H1 (cell line): ENCODE measurements at regions of chr3 and their contacts with region 1.

Region 1: GRCh38 chr3:186965141-186965879 is 35.0 kb downstream of the ST6GAL1 start:
- DNase-seq: no peak
- H3K4me3 ChIP-seq: peak overlapping the region in 2 of 4 experiments; percentile 7 to 18; a peak in 3 of 8 replicates
- H3K27ac ChIP-seq: peak overlapping the region; percentile 64
- H3K4me1 ChIP-seq: peaks cover 20 to 36% (median 28%) of the 10 kb centered on the region in 4 experiments
- H3K27me3 ChIP-seq: no peaks in the 10 kb centered on the region
- CTCF ChIP-seq: no peak
- EP300 ChIP-seq: no peak
- POLR2A ChIP-seq: no peak
- RAD21 ChIP-seq: no peak

Region 2: GRCh38 chr3:186920301-186920700 is 45.0 kb before region 1 on chr3:
- CTCF ChIA-PET with region 1: no interaction called
- POLR2A ChIA-PET with region 1: no interaction called
- DNase-seq: no peak
- H3K4me3 ChIP-seq: no peak overlapping the region
- H3K27ac ChIP-seq: no peak overlapping the region
- H3K4me1 ChIP-seq: no peaks in the 10 kb centered on the region
- H3K27me3 ChIP-seq: no peaks in the 10 kb centered on the region
- CTCF ChIP-seq: no peak
- EP300 ChIP-seq: no peak
- POLR2A ChIP-seq: no peak
- RAD21 ChIP-seq: no peak

Region 3: DNA sequence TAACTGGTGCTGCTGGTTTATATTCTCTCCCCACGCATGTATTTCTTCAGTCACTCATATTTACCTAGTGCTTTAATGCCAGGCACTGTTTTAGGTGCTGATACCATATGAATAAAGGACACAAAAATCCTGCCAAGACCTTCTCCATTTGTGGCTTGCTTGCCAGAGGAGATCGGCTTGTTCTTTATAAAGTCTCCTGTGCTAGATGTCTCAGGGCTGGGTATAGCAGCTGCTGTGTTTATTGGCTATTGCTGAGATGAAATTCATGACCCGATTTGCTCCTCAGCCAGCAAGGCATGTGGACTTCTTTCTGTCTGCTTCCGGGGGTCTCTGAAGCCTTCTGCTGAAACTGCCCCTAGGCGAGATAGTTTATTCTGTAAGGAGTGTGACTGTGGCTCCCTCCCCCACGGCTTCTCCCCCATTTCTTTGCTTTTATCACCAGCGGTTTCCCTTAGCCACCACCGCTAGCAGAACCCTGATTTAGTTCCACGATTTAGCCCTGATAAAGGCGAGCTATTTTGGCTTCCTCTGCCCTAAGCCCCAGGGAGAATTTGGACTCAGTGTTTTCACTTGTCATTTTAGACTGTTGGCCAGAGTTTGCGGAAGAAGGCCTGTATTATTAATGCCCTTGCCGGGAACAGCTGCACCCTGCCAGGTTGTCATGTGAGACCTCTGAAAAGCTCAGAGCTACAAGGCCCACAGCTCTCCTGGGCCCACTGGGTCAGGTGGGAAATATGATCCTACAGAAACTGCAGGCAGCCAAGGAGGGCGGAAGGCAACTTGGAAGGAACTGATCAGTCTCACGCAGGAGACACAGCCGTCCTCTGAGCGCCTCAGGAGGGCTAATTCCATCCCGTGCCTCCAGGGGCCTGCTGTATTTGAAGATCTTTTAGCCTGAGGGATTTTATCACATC is 11.8 kb after region 1 on chr3:
- CTCF ChIA-PET with region 1: interaction called, 11 read pairs
- POLR2A ChIA-PET with region 1: interaction called, 6 read pairs
- DNase-seq: no peak
- H3K4me3 ChIP-seq: no peak overlapping the region
- H3K27ac ChIP-seq: peak overlapping the region; percentile 28; the same call in 1 of the 2 replicates
- H3K4me1 ChIP-seq: peaks cover 0 to 9% (median 5%) of the 10 kb centered on the region in 4 experiments; a peak in 6 of 7 replicates
- H3K27me3 ChIP-seq: no peaks in the 10 kb centered on the region
- CTCF ChIP-seq: peak in 2 of 3 experiments; percentile 4 to 15; a peak in 2 of 4 replicates
- EP300 ChIP-seq: no peak
- POLR2A ChIP-seq: no peak
- RAD21 ChIP-seq: peak in 1 of 2 experiments; percentile 22; a peak in 1 of 4 replicates